ENCODE measurements at regions of chr5 and their contacts with region 1.

Region 1: DNA sequence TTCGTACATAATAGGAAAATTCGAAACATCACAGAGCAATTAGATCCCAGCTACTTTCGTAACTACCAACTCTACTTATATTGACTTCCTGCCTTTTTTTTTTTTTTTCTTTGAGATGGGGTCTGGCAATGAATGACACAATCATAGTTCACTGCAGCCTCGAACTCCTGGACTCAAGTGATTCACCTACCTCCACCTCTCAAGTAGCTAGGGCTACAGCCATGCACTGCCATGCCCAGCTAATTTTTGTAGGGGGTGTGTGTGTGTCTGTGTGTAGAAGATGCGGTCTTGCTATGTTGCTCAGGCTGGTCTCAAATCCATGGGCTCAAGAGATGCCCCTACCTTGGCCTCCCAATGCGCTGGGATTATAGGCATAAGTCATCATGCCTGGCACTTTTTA is 5.8 kb upstream of the PAIP2 start:
- DNase-seq: no peak
- H3K4me3 ChIP-seq: no peak overlapping the region
- H3K27ac ChIP-seq: no peak overlapping the region
- H3K4me1 ChIP-seq: no peaks in the 10 kb centered on the region
- H3K27me3 ChIP-seq: no peaks in the 10 kb centered on the region
- CTCF ChIP-seq: no peak
- EP300 ChIP-seq: no peak
- POLR2A ChIP-seq: peak in 1 of 2 experiments; percentile 19; a peak in 2 of 3 replicates
- RAD21 ChIP-seq: no peak

Region 2: DNA sequence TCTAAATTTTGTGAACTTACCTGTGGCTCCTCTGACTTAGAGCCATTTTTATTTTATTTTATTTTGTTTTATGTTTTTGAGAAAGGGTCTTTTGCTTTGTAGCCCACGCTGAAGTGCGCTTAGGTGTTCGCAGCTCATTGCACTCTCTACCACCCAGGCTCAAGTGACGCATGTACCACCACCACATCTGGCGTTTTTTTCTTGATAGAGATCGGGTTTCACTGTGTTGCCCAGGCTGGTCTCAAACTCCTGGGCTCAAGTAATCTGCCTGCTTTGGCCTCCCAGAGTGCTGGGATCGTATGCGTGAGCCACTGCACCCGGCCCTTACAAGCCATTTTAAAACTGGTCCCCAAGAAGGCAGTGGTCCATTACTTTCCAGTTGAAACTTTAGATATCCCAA is 23.7 kb before region 1 on chr5:
- CTCF ChIA-PET with region 1: interaction called, 3 read pairs
- POLR2A ChIA-PET with region 1: interaction called, 163 read pairs
- DNase-seq: no peak
- H3K4me3 ChIP-seq: 0 out of 8 replicates have a peak overlapping the region, but pooled peaks of 1 of the 4 experiments have one; percentile 5
- H3K27ac ChIP-seq: no peak overlapping the region
- H3K4me1 ChIP-seq: peaks cover 0 to 10% (median 5%) of the 10 kb centered on the region in 4 experiments; a peak in 6 of 7 replicates
- H3K27me3 ChIP-seq: no peaks in the 10 kb centered on the region
- CTCF ChIP-seq: no peak
- EP300 ChIP-seq: no peak
- POLR2A ChIP-seq: no peak
- RAD21 ChIP-seq: no peak